MCF 10A (cell line): ENCODE measurements at regions of chr15 and their contacts with region 1.

Region 1: DNA sequence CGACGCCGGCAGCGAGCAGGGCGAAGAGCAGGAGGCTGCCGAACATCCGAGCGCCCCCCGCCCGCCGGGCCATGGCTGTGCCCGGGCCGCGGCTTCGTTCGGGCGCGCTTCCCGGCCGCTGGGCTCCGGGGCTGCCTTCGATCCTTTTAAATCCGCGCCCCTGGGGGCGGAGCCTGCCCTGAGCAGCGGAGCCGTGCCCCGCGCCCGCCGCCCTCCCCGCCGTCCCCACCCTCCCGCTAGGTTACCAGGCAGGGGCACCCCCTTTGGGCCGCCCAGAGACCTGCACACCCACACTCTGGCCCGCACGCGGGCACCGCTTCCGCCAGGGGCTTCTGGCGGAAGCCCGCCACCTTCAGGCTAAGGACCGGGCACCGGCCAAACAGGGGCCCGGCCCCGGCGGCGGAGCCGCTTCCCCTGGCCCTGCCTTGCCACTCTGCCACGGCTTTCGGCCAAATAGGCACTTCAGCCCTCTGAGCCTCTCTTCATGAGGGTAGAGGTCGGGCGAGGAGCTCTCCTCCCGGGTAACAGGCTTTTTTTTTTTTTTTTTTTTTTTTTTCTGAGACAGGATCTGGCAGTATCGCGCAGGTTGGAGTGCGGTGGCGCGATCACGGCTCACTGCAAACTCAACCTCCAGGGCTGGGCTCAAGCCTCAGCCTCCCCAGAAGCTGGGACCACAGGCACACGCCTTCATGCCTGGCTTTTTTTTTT is at the start of gene NMB:
- DNase-seq: peak; percentile 80
- H3K4me3 Mint-ChIP-seq: peak within 1 kb of the TSS; percentile 68
- H3K27ac Mint-ChIP-seq: peak within 1 kb of the TSS; percentile 83
- H3K4me1 Mint-ChIP-seq: peaks cover 6% of the 10 kb centered on the region
- H3K27me3 Mint-ChIP-seq: no peaks in the 10 kb centered on the region
- CTCF ChIP-seq: peak; percentile 53
- total RNA-seq, gene NMB: 5.1 and 7.1 TPM in 2 replicates

Region 2: DNA sequence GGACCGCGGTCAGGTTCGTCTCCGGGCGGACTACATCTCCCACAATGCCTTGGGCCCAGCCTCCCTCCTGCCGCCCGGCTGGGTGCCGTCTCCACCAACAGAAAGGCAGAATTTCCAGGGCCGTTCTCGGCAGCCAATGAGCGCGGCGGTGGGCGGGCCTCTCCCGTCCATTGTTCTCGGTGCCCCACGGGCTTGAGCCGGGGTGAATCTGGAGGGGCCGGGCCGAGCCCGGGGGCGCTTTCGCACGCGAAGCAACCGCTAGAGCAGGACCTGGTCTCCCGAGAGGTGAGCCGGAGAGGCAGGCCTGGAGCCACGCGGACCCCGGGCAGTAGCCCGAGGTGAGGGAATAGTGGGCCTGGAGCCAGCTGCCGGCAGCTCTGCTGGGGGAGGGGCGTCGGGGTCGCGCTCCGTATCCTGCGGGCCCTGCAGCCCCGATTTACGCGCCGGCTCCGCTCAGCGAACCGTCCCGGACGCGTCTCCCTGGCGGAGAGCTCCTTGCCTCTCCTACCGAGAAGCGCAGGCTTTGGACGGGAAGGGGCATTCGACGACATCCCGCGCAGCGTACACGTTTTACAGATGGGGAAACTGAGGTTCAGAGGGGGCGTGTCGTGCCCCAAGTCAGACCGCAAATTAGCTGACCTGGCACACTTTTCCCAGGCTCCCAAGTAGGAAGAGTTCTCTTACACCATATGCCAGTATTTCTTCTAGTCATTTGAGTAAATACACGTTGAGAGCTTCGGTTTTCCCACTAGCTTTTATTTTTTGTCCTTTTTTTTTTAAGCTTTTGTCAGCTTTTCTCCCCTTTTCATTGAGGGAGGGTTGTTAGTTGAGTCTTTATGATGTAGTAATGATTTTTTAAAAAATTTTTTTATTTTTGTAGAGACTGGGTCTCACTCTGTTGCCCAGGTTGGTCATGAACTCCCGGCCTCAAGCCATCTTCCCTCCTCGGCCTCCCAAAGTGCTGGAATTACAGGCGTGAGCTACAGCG is 57.1 kb before region 1 on chr15 and contains the start of gene ZSCAN2:
- CTCF ChIA-PET with region 1: interaction called, 4 read pairs
- POLR2A ChIA-PET with region 1: interaction called, 4 read pairs
- intact Hi-C with region 1: loop called (anchors 5 kb)
- DNase-seq: peak; percentile 95
- H3K4me3 Mint-ChIP-seq: peak within 1 kb of the TSS; percentile 97
- H3K27ac Mint-ChIP-seq: peak within 1 kb of the TSS; percentile 74
- H3K4me1 Mint-ChIP-seq: no peaks in the 10 kb centered on the region
- H3K27me3 Mint-ChIP-seq: no peaks in the 10 kb centered on the region
- CTCF ChIP-seq: no peak
- total RNA-seq, gene ZSCAN2: 4.2 and 4.3 TPM in 2 replicates

Region 3: DNA sequence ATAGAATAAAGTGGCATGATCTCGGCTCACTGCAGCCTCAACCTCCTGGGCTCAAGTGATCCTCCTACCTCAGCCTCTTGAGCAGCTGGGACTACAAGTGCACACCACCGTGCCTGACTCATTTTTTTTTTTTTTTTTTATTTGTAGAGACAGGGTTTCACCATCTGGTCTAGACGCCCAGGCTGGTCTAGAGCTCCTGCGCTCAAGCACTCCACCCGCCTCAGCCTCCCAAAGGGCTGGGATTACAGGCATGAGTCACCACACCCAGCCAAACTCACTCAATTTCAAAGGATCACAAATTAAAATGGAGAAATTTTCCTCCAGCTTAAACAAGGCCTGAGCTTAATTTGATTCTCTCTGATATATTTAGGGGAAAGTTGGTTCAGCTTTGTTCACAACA is 27.1 kb after region 1 on chr15:
- CTCF ChIA-PET with region 1: interaction called, 5 read pairs
- POLR2A ChIA-PET with region 1: interaction called, 7 read pairs
- intact Hi-C with region 1: loop called (anchors 2 kb)
- DNase-seq: peak; percentile 90
- H3K4me3 Mint-ChIP-seq: no peak overlapping the region
- H3K27ac Mint-ChIP-seq: no peak overlapping the region
- H3K4me1 Mint-ChIP-seq: peaks cover 12% of the 10 kb centered on the region
- H3K27me3 Mint-ChIP-seq: no peaks in the 10 kb centered on the region
- CTCF ChIP-seq: no peak

Region 4: GRCh38 chr15:84748274-84749110 is 90.3 kb after region 1 on chr15 and contains the start of gene ZNF592:
- CTCF ChIA-PET with region 1: interaction called, 7 read pairs
- POLR2A ChIA-PET with region 1: interaction called, 6 read pairs
- intact Hi-C with region 1: loop called (anchors 1 kb)
- DNase-seq: peak; percentile 66
- H3K4me3 Mint-ChIP-seq: peak within 1 kb of the TSS; percentile 90
- H3K27ac Mint-ChIP-seq: peak within 1 kb of the TSS; percentile 93
- H3K4me1 Mint-ChIP-seq: peaks cover 41% of the 10 kb centered on the region
- H3K27me3 Mint-ChIP-seq: no peaks in the 10 kb centered on the region
- CTCF ChIP-seq: peak; percentile 19
- total RNA-seq, gene ZNF592: 27.0 and 27.5 TPM in 2 replicates

Region 5: GRCh38 chr15:84855136-84855535 is 196.9 kb after region 1 on chr15:
- CTCF ChIA-PET with region 1: no interaction called
- POLR2A ChIA-PET with region 1: no interaction called
- intact Hi-C with region 1: no loop called
- DNase-seq: no peak
- H3K4me3 Mint-ChIP-seq: no peak overlapping the region
- H3K27ac Mint-ChIP-seq: no peak overlapping the region
- H3K4me1 Mint-ChIP-seq: no peaks in the 10 kb centered on the region
- H3K27me3 Mint-ChIP-seq: no peaks in the 10 kb centered on the region
- CTCF ChIP-seq: no peak

Region 6: GRCh38 chr15:84929744-84930371 is 271.6 kb after region 1 on chr15:
- CTCF ChIA-PET with region 1: interaction called, 40 read pairs
- POLR2A ChIA-PET with region 1: interaction called, 11 read pairs
- intact Hi-C with region 1: loop called (anchors 2 kb)
- DNase-seq: peak; percentile 52
- H3K4me3 Mint-ChIP-seq: no peak overlapping the region
- H3K27ac Mint-ChIP-seq: no peak overlapping the region
- H3K4me1 Mint-ChIP-seq: peaks cover 20% of the 10 kb centered on the region
- H3K27me3 Mint-ChIP-seq: no peaks in the 10 kb centered on the region
- CTCF ChIP-seq: no peak